Calu3 (cell line): ENCODE measurements at regions of chr11 and their contacts with region 1.

Region 1: DNA sequence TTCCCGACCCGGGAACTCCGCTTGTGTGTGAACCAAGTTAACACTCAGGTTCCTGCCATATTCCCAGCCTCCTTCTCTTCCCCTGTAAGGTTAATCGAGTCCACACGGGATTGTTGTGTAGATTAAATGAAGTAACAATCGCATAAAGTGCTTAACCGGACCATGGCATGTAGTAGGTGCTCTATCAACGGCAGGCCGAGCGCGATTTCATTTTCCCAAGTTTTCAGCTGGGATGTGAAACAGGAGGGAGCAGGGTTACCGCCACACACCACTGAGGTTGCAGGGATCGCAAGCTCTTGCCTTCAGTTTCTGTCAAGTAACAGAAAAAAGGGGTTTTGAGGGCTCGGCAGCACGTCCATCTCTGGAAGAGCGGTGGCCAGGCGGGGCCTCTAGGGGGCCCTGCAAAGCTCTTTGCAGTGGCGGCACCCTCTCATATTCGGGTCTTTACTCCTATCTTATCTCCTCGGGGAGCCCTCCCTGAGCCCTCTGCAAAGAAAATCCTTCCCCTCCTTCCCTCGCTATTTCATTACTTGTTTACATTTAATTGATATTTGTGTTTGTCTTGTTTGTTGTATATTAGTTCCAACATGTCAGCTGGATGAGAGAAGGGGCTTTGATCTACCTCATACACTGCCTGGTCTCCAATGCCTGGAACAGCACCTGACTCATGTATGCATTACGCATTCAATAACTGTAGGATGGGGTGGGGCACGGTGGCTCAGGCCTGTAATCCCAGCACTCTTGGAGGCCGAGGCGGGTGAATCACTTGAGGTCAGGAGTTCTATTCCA is 818 bp upstream of the PLEKHA7 start:
- DNase-seq: peak; percentile 75
- H3K4me3 Mint-ChIP-seq: peak overlapping the region; percentile 94
- H3K27ac Mint-ChIP-seq: peak overlapping the region; percentile 89
- H3K4me1 Mint-ChIP-seq: peaks cover 27% of the 10 kb centered on the region
- H3K27me3 Mint-ChIP-seq: no peaks in the 10 kb centered on the region
- CTCF ChIP-seq: peak; percentile 53

Region 2: DNA sequence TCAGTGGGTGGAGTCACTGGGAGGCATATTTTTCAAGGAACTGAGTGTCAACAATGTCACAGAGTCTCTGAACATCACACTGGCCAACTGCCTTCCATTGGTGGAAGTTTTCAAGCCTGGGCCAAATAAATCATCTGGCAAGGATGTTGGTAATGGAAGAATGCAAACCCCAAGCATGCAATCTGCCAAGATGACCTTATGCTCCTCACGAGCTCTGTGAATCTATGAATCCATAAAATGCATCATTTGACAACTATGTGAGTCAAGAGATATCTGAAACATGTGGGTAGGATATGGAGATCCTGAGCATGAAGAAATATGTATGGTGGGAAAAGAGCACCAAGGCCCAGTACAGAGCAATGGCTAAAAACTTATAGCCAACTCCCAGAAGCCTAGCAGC is 123.1 kb before region 1 on chr11:
- CTCF ChIA-PET with region 1: no interaction called
- intact Hi-C with region 1: no loop called
- DNase-seq: no peak
- H3K4me3 Mint-ChIP-seq: peak overlapping the region; percentile 43
- H3K27ac Mint-ChIP-seq: peak overlapping the region; percentile 93
- H3K4me1 Mint-ChIP-seq: peaks cover 86% of the 10 kb centered on the region
- H3K27me3 Mint-ChIP-seq: no peaks in the 10 kb centered on the region
- CTCF ChIP-seq: no peak

Region 3: GRCh38 chr11:16958833-16959232 is 56.2 kb before region 1 on chr11:
- CTCF ChIA-PET with region 1: interaction called, 3 read pairs
- intact Hi-C with region 1: loop called (anchors 5 kb)
- DNase-seq: no peak
- H3K4me3 Mint-ChIP-seq: peak overlapping the region; percentile 23
- H3K27ac Mint-ChIP-seq: peak overlapping the region; percentile 79
- H3K4me1 Mint-ChIP-seq: peaks cover 70% of the 10 kb centered on the region
- H3K27me3 Mint-ChIP-seq: no peaks in the 10 kb centered on the region
- CTCF ChIP-seq: no peak

Region 4: DNA sequence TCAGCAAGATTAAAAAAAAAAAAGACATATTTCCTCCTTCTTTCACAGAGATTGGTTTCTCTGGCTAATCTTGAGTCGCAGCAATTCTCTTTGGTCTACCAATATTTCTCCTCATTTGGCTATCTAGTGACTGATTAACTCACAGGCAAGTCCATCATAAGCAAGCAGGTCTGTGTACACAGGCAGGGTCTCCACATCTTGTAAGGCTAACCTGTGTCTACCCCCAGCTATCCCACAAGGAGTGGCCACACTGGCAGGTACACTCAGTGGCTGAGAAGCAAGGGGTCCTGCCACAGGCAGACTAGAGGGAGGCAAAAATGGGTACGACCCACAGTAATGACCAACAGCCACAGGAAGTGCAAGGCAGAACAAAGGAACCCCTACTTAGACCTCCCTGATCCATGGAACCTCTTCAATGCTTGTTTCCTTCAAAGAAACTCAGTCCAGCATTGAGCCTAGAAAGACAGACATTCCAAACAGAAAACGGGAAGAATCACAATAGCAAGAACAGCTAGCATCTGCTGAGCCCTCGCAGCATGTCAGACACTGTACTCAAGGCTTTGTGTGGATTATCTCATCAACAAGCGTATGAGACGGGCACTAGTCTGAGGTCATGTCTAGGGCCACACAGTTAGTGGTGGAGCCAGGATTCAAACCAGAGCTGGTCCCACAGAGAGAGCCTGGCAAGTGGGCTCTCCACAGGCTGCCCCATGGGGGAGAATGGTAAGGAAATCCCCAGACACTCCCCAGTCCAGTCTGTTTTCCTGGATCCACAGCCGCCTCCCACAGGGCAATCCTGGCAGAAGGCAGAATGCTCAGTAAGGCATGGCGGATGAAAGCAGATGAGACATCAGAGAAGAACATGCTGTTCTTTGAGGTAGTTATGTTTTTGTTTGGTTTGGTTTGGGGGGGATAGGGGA is 35.1 kb before region 1 on chr11:
- CTCF ChIA-PET with region 1: interaction called, 6 read pairs
- intact Hi-C with region 1: loop called (anchors 5 kb)
- DNase-seq: no peak
- H3K4me3 Mint-ChIP-seq: peak overlapping the region; percentile 50
- H3K27ac Mint-ChIP-seq: peak overlapping the region; percentile 99
- H3K4me1 Mint-ChIP-seq: peaks cover 88% of the 10 kb centered on the region
- H3K27me3 Mint-ChIP-seq: no peaks in the 10 kb centered on the region
- CTCF ChIP-seq: no peak

Region 5: GRCh38 chr11:16986434-16987215 is 28.4 kb before region 1 on chr11:
- CTCF ChIA-PET with region 1: interaction called, 6 read pairs
- intact Hi-C with region 1: loop called (anchors 2 kb)
- DNase-seq: peak; percentile 82
- H3K4me3 Mint-ChIP-seq: peak overlapping the region; percentile 49
- H3K27ac Mint-ChIP-seq: peak overlapping the region; percentile 80
- H3K4me1 Mint-ChIP-seq: peaks cover 81% of the 10 kb centered on the region
- H3K27me3 Mint-ChIP-seq: no peaks in the 10 kb centered on the region
- CTCF ChIP-seq: no peak

Region 6: GRCh38 chr11:17046690-17047089 is 31.7 kb after region 1 on chr11:
- CTCF ChIA-PET with region 1: no interaction called
- intact Hi-C with region 1: loop called (anchors 1 kb)
- DNase-seq: no peak
- H3K4me3 Mint-ChIP-seq: no peak overlapping the region
- H3K27ac Mint-ChIP-seq: no peak overlapping the region
- H3K4me1 Mint-ChIP-seq: peaks cover 38% of the 10 kb centered on the region
- H3K27me3 Mint-ChIP-seq: no peaks in the 10 kb centered on the region
- CTCF ChIP-seq: no peak